ENCODE measurements at regions of chr1 and their contacts with region 1.

Region 1: DNA sequence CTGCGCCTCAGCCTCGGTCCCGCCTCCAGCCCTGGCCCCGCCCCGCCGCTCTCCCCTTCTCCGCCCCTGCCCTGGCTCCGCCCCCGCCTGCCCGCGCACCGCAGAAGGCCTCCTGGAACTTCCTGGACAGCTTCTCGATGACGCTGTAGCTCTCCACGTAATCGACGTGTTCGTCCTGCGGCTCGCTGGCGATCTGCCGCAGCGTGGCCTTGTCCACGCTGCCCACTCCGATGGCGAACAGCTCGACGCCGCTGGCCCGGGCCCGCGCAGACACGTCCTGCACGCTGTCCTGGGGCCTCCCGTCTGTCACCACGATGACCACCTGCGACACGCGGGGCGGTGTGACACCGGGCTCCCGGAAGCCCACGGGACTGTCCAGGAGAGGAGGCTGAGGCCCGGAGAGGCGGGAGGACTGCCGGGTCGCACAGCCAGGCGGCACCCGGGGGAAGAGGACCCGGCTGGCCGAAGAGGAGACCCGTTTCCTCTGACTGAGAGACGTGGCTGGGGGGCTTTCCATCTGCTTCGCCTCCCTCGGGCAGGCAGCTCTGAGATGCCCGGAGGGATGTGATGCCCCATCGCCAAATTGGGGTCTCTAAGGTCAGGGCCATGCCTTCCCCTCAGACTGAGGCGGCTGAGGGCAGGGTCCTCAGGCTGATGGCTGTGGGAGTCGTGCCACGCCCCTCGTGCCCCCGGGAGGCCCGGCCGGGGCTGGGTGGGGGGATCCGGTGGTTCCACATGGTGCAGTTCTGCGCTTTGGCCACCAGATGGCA is 4.6 kb downstream of the MATN1 start:
- DNase-seq: peak; percentile 83
- H3K4me3 ChIP-seq: peak overlapping the region; percentile 80
- H3K27ac ChIP-seq: peak overlapping the region; percentile 40
- H3K4me1 ChIP-seq: peaks cover 28% of the 10 kb centered on the region
- CTCF ChIP-seq: peak; percentile 96

Region 2: GRCh38 chr1:29960876-29961275 is 757.9 kb before region 1 on chr1:
- CTCF ChIA-PET with region 1: no interaction called
- POLR2A ChIA-PET with region 1: no interaction called
- intact Hi-C with region 1: no loop called
- DNase-seq: no peak
- H3K4me3 ChIP-seq: no peak overlapping the region
- H3K27ac ChIP-seq: no peak overlapping the region
- H3K4me1 ChIP-seq: no peaks in the 10 kb centered on the region
- CTCF ChIP-seq: no peak

Region 3: DNA sequence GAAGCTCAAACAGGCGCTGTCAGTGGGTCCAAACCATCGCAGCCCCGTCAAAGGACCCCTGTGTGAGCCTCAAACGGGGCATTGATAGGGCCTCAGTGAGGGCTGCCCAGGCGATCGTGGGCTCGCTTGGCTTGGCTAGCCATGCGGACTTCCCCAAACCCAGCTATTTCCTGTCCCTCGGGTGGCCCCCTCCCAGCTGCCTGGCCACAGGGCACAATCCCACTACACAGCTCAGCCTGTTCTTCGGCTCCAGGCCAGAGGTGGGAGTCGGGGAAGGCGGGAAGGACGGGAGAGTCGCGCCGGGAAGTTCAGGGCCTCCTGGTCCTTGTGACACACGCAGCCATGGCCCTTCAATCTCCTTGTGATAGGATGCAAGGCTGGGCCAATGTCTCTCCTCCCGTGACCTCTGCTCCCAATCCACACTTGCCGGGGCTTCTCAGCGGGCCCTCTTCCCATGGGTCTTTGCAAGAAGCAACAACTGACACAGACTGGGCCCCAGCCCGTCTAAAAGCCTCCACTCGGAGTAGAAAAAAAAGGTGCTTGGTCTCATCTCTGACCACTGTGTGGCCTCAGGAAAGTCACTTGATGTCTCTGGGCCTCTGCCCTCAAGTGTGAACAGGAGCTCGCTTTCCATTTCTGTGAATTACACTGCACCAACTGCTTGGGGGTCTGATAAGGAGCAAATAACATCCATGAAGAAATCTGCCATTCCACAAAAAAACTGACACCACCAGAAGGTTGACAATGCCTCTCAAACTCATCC is 11.7 kb after region 1 on chr1:
- CTCF ChIA-PET with region 1: interaction called, 5 read pairs
- POLR2A ChIA-PET with region 1: interaction called, 10 read pairs
- intact Hi-C with region 1: no loop called
- DNase-seq: peak; percentile 81
- H3K4me3 ChIP-seq: peak overlapping the region; percentile 2
- H3K27ac ChIP-seq: no peak overlapping the region
- H3K4me1 ChIP-seq: peaks cover 37% of the 10 kb centered on the region
- CTCF ChIP-seq: no peak

Region 4: DNA sequence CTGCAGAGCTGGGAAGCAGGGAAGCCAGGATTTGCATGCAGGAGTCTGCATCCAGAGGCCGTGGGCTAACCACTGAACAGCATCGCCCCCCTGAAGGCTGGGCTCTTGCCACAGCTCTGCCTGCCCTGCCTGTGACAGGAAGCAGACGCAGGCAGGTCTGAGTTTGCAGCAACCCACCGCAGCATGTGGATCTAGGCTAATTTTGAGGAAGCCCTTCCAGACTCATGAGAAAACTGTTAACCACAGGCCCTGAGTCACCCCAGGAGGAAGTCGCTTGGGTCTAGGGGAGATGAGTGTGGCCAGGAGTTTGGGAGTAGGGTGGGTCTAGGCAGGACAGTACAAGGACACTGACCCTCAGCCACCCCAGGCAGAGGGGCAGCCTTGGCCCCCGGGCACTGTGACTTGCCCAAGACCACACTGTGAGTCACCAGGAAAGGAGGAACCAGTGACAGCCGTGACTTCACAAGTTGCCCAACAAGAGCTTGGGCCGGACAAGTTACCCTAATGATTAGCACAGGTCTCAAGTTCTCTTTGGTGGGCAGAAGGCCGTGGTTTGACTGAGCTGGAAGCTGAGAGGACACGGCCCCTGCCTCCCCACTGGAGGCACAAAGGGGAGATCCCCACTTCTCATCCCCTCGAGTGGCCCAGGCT is 37.8 kb after region 1 on chr1:
- CTCF ChIA-PET with region 1: interaction called, 17 read pairs
- POLR2A ChIA-PET with region 1: interaction called, 12 read pairs
- intact Hi-C with region 1: loop called (anchors 1 kb)
- DNase-seq: peak; percentile 80
- H3K4me3 ChIP-seq: peak overlapping the region; percentile 69
- H3K27ac ChIP-seq: peak overlapping the region; percentile 99
- H3K4me1 ChIP-seq: peaks cover 99% of the 10 kb centered on the region
- CTCF ChIP-seq: no peak

Region 5: GRCh38 chr1:30788580-30789387 is 70.0 kb after region 1 on chr1:
- CTCF ChIA-PET with region 1: interaction called, 13 read pairs
- POLR2A ChIA-PET with region 1: interaction called, 3 read pairs
- intact Hi-C with region 1: no loop called
- DNase-seq: no peak
- H3K4me3 ChIP-seq: no peak overlapping the region
- H3K27ac ChIP-seq: no peak overlapping the region
- H3K4me1 ChIP-seq: peaks cover 8% of the 10 kb centered on the region
- CTCF ChIP-seq: no peak

Region 6: GRCh38 chr1:30929135-30929889 is 210.5 kb after region 1 on chr1:
- CTCF ChIA-PET with region 1: no interaction called
- POLR2A ChIA-PET with region 1: no interaction called
- intact Hi-C with region 1: loop called (anchors 1 kb)
- DNase-seq: peak; percentile 60
- H3K4me3 ChIP-seq: no peak overlapping the region
- H3K27ac ChIP-seq: no peak overlapping the region
- H3K4me1 ChIP-seq: no peaks in the 10 kb centered on the region
- CTCF ChIP-seq: peak; percentile 87